H1 (cell line): ENCODE measurements at regions of chr10 and their contacts with region 1.

Region 1: DNA sequence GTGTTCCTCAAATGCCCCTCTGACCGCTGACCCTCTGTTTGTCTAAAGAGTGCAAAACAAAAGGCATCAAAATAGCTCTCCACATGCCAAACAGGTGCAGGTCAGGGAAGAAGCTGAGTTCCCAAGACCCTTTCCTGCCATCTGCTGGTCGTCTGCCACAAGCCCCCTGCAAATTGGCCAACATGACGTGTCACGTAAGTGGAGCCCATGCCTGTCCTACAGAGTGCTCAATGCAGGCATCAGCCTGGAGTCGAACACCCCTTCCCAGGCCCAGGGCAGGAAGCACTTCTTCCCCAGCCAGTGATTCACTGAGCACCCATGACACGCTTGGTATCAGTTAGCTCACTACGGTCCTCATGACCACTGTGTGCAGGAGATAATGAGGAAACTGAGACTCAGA is 14.1 kb downstream of the TMEM72 start:
- DNase-seq: peak; percentile 63 to 75
- H3K4me3 ChIP-seq: no peak overlapping the region
- H3K27ac ChIP-seq: no peak overlapping the region
- H3K4me1 ChIP-seq: peaks cover 0 to 7% (median 0%) of the 10 kb centered on the region in 4 experiments; a peak in 1 of 7 replicates
- H3K27me3 ChIP-seq: peaks cover 0 to 6% (median 2%) of the 10 kb centered on the region in 4 experiments; a peak in 2 of 7 replicates
- CTCF ChIP-seq: peak; percentile 72 to 94 (median 91)
- EP300 ChIP-seq: no peak
- POLR2A ChIP-seq: no peak
- RAD21 ChIP-seq: peak; percentile 86 to 91

Region 2: GRCh38 chr10:44864637-44865288 is 60.5 kb before region 1 on chr10:
- CTCF ChIA-PET with region 1: interaction called, 14 read pairs
- POLR2A ChIA-PET with region 1: interaction called, 4 read pairs
- DNase-seq: peak; percentile 51 to 99
- H3K4me3 ChIP-seq: peak overlapping the region; percentile 36 to 61 (median 59); a peak in 7 of 8 replicates
- H3K27ac ChIP-seq: no peak overlapping the region
- H3K4me1 ChIP-seq: peaks cover 2 to 17% (median 8%) of the 10 kb centered on the region in 4 experiments; a peak in 6 of 7 replicates
- H3K27me3 ChIP-seq: peaks cover 6 to 38% (median 31%) of the 10 kb centered on the region in 4 experiments
- CTCF ChIP-seq: peak; percentile 77 to 97 (median 86)
- EP300 ChIP-seq: no peak
- POLR2A ChIP-seq: peak; percentile 47 to 59; a peak in 2 of 3 replicates
- RAD21 ChIP-seq: peak; percentile 78 to 84

Region 3: DNA sequence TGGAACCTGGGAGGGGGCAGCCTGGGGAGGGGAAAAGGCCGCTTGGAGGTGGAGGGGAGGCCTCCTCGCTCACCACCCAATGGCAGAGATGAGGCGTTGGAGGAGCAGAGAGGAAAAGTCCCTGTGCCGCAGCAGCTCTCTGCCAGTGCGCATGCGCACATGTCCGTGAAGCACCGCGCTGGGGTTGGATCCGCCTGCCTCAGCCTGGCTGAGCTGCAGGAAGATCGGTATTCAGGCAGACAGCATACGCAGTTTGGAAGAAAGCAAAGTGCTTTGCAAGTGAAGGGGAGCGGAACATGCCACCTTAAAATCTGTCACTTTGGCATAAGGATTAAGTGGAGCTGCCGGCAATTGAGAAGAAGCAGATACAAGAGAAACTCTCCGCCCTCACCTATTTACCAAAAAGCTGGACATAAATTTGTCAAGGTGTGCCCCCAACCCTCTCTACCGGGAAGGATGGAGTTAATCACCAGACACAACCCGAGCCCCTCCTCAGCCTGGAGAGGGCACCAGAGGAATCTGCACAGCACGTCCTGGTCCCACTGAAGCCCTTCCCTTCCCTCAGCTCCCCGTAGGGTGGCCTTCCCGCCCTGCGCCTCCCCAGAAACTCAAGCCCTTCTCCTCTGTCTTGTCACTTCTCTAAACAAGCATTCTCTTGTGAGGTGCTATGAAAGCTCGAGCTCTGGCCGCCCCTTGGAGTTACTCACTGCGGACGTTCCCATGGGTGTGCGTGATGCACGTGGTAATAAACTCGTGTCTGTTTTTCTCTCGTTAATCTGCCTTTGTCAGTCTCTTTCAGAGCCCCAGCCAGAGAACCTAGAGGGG is 46.3 kb before region 1 on chr10:
- CTCF ChIA-PET with region 1: interaction called, 24 read pairs
- POLR2A ChIA-PET with region 1: interaction called, 5 read pairs
- DNase-seq: peak; percentile 88 to 90
- H3K4me3 ChIP-seq: peak overlapping the region; percentile 39 to 57 (median 47); a peak in 7 of 8 replicates
- H3K27ac ChIP-seq: no peak overlapping the region
- H3K4me1 ChIP-seq: peaks cover 0 to 7% (median 6%) of the 10 kb centered on the region in 4 experiments; a peak in 6 of 7 replicates
- H3K27me3 ChIP-seq: peaks cover 0 to 11% (median 5%) of the 10 kb centered on the region in 4 experiments; a peak in 6 of 7 replicates
- CTCF ChIP-seq: peak; percentile 26 to 58 (median 40); a peak in 3 of 4 replicates
- EP300 ChIP-seq: no peak
- POLR2A ChIP-seq: no peak
- RAD21 ChIP-seq: peak; percentile 42 to 54

Region 4: GRCh38 chr10:44908066-44908749 is 17.0 kb before region 1 on chr10:
- CTCF ChIA-PET with region 1: interaction called, 10 read pairs
- POLR2A ChIA-PET with region 1: interaction called, 6 read pairs
- DNase-seq: peak in 1 of 2 experiments; percentile 53
- H3K4me3 ChIP-seq: no peak overlapping the region; a peak in 1 of 8 replicates
- H3K27ac ChIP-seq: no peak overlapping the region
- H3K4me1 ChIP-seq: peaks cover 9 to 17% (median 11%) of the 10 kb centered on the region in 4 experiments; a peak in 6 of 7 replicates
- H3K27me3 ChIP-seq: no peaks in the 10 kb centered on the region
- CTCF ChIP-seq: no peak
- EP300 ChIP-seq: no peak
- POLR2A ChIP-seq: no peak
- RAD21 ChIP-seq: no peak

Region 5: DNA sequence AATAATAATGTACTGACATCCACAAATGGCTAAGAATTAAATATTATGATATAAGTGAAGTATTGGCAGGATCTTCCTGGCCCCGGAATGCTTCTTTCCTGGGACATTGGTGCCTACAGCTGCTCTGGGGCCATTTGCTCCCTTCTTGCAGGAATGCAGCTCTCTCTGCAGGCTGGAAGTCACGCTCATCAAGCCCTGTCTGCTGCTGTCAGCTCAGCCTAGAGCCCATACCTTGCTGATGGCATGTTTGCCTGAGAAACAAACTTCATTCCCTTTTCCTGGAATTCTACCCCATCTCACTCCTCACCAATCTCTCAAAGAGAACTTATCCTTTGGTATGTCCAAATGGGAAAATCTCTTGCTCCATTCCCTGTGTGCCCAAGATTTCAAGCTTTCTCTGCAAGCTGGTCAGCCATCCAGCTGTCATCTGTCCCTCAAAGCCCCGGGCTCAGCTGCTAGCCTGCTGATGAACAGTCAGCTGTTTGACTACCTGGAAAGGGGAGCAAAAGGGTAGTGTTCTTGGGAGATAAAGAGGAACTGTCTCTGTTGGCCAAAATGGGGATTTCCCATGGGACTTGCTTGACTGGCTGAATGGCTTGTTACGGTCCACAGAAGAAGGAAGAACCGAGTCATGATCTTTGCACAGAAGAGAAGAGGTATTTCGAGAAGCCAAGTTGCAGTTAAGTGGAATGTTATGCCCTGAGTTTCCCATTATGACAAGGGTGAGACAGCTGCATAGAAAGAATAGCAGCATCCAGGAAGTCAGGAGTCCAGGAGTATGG is 22.3 kb after region 1 on chr10:
- CTCF ChIA-PET with region 1: interaction called, 117 read pairs
- POLR2A ChIA-PET with region 1: interaction called, 3 read pairs
- DNase-seq: peak in 1 of 2 experiments; percentile 28
- H3K4me3 ChIP-seq: no peak overlapping the region
- H3K27ac ChIP-seq: no peak overlapping the region
- H3K4me1 ChIP-seq: peaks cover 0 to 1% (median 0%) of the 10 kb centered on the region in 4 experiments; a peak in 1 of 7 replicates
- H3K27me3 ChIP-seq: no peaks in the 10 kb centered on the region; a peak in 1 of 7 replicates
- CTCF ChIP-seq: no peak
- EP300 ChIP-seq: no peak
- POLR2A ChIP-seq: no peak
- RAD21 ChIP-seq: no peak

Region 6: GRCh38 chr10:44990302-44990655 is 65.1 kb after region 1 on chr10:
- CTCF ChIA-PET with region 1: interaction called, 16 read pairs
- POLR2A ChIA-PET with region 1: no interaction called
- DNase-seq: peak; percentile 64 to 69
- H3K4me3 ChIP-seq: peak overlapping the region in 2 of 4 experiments; percentile 14 to 16; a peak in 2 of 8 replicates
- H3K27ac ChIP-seq: no peak overlapping the region; the same call in 1 of the 2 replicates
- H3K4me1 ChIP-seq: peaks cover 9 to 43% (median 26%) of the 10 kb centered on the region in 4 experiments; a peak in 6 of 7 replicates
- H3K27me3 ChIP-seq: peaks cover 0 to 3% (median 1%) of the 10 kb centered on the region in 4 experiments; a peak in 4 of 7 replicates
- CTCF ChIP-seq: peak; percentile 78 to 87 (median 82)
- EP300 ChIP-seq: no peak
- POLR2A ChIP-seq: no peak
- RAD21 ChIP-seq: peak; percentile 60 to 73